ENCODE measurements at regions of chr12 and their contacts with region 1.

Region 1: DNA sequence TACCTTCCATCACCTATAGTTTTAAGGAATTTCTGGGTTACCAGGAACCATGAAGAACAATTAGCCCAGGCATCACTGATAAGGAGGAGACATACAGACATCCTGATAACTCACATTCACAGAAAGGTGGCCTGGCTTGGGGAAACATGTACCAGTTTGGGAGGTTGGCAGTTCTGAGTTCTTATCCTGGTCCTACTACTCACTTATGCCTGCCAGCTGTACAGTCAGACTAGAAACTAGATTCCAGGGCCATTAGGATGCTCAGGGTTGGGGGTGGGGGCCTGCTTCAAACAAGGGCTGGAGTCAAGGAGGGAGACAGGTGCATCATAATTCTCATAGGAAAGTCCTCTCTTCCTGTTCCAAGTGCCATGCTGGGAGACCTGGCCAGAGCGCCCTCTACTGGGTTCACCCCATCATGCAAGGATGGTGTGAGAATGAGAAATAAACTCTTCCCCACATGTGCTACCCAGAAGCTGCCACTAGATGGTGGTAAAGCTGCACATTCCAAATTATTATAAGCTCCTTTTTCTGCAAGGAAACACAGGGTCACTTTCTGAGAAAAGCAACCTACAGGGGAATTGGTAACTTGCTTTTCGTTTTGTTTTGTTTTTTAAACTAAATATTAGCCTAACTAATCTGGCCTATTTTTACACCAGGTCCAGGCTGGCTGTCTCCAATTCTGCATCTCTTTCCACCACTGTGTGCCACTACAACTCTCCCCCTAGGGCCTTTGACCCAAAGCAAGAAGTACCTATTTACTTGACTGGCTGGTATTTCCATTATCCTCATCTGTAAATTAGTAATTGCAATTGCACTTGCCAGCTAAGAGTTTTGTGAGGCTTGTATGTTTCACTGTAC is 14.5 kb downstream of the OAS2 start:
- DNase-seq: peak; percentile 73
- ATAC-seq: peak; percentile 76
- H3K4me3 ChIP-seq: no peak overlapping the region
- H3K4me3 Mint-ChIP-seq: no peak overlapping the region
- H3K27ac ChIP-seq: peak overlapping the region in 1 of 2 donors; percentile 40
- H3K27ac Mint-ChIP-seq: peak overlapping the region; percentile 53
- H3K4me1 ChIP-seq: peaks cover 8 to 12% of the 10 kb centered on the region in 2 donors
- H3K4me1 Mint-ChIP-seq: peaks cover 24% of the 10 kb centered on the region
- H3K27me3 ChIP-seq: no peaks in the 10 kb centered on the region
- H3K27me3 Mint-ChIP-seq: no peaks in the 10 kb centered on the region
- CTCF ChIP-seq: peak; percentile 90

Region 2: GRCh38 chr12:112906712-112907414 is 85.9 kb before region 1 on chr12 and contains the start of gene OAS1:
- CTCF ChIA-PET with region 1: interaction called, 54 read pairs
- POLR2A ChIA-PET with region 1: no interaction called
- intact Hi-C with region 1: no loop called
- DNase-seq: peak; percentile 79
- ATAC-seq: peak; percentile 73
- H3K4me3 ChIP-seq: peak within 1 kb of the TSS; percentile 47 to 90 (median 71)
- H3K4me3 Mint-ChIP-seq: peak within 1 kb of the TSS; percentile 95
- H3K27ac ChIP-seq: peak within 1 kb of the TSS; percentile 79 to 83
- H3K27ac Mint-ChIP-seq: peak within 1 kb of the TSS; percentile 95
- H3K4me1 ChIP-seq: peaks cover 45 to 75% of the 10 kb centered on the region in 2 donors
- H3K4me1 Mint-ChIP-seq: peaks cover 89% of the 10 kb centered on the region
- H3K27me3 ChIP-seq: no peaks in the 10 kb centered on the region
- H3K27me3 Mint-ChIP-seq: no peaks in the 10 kb centered on the region
- CTCF ChIP-seq: no peak
- total RNA-seq, gene OAS1: 45.7 and 48.3 TPM in 2 replicates

Region 3: GRCh38 chr12:113005754-113006153 is 13.0 kb after region 1 on chr12:
- CTCF ChIA-PET with region 1: interaction called, 10 read pairs
- POLR2A ChIA-PET with region 1: no interaction called
- intact Hi-C with region 1: no loop called
- DNase-seq: no peak
- ATAC-seq: no peak
- H3K4me3 ChIP-seq: no peak overlapping the region
- H3K4me3 Mint-ChIP-seq: no peak overlapping the region
- H3K27ac ChIP-seq: no peak overlapping the region
- H3K27ac Mint-ChIP-seq: no peak overlapping the region
- H3K4me1 ChIP-seq: no peaks in the 10 kb centered on the region
- H3K4me1 Mint-ChIP-seq: no peaks in the 10 kb centered on the region
- H3K27me3 ChIP-seq: no peaks in the 10 kb centered on the region
- H3K27me3 Mint-ChIP-seq: no peaks in the 10 kb centered on the region
- CTCF ChIP-seq: peak; percentile 26

Region 4: DNA sequence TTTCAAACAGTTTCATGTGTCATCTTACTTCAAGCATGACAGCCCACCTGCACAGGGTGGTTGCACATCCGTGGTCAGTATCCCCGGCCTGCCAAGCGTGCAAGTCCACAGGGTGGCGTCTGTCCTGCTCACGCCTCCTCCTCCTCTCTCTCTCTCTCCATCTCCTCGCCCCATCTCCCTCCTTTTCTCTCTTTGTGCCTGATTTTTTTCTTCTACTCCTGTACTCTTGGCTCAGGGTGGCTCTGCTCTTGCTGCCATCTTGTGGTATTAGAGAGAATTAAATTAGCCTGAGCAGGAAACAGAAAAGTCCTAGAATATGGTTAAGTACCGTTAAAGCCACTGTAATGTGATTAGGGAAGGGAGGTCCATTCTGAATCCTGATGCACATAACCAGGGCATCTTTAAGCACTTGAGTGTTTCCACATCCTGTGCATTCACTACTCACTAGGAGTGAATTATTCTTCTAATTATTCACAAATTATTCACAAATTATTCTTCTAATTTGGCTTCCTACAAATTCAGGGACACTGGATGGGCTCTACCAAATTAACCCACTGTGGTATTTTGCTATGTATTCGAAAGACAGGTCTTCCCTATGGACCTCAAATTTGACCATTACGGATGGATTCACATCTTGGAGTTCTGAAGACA is 38.2 kb after region 1 on chr12:
- CTCF ChIA-PET with region 1: interaction called, 52 read pairs
- POLR2A ChIA-PET with region 1: no interaction called
- intact Hi-C with region 1: loop called (anchors 1 kb)
- DNase-seq: peak; percentile 67
- ATAC-seq: no peak
- H3K4me3 ChIP-seq: no peak overlapping the region
- H3K4me3 Mint-ChIP-seq: peak overlapping the region; percentile 0
- H3K27ac ChIP-seq: no peak overlapping the region
- H3K27ac Mint-ChIP-seq: no peak overlapping the region
- H3K4me1 ChIP-seq: peaks cover 4 to 6% of the 10 kb centered on the region in 2 donors
- H3K4me1 Mint-ChIP-seq: peaks cover 5% of the 10 kb centered on the region
- H3K27me3 ChIP-seq: no peaks in the 10 kb centered on the region
- H3K27me3 Mint-ChIP-seq: peaks cover 3% of the 10 kb centered on the region
- CTCF ChIP-seq: peak; percentile 83

Region 5: DNA sequence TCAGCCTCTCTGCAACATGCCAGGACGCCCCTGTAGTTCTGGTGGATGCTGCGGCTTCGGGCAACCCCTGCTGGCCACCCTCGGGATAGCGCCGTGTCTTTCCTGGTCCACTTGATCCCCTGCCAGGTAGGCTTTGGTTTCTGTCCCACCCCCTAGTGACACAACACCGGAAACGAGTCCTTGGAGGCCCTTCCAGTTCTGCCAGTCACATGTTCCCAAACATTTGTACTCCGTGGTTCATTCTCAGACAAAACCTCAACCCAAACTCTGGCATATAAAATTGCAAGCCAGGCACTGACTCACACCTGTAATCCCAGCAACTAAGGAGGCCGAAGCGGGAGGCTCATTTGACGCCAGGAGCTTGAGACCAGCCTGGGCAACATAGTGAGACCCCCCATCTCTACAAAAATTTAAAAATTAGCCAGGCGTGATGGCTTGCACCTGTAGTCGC is 105.7 kb after region 1 on chr12:
- CTCF ChIA-PET with region 1: interaction called, 38 read pairs
- POLR2A ChIA-PET with region 1: no interaction called
- intact Hi-C with region 1: loop called (anchors 2 kb)
- DNase-seq: peak; percentile 82
- ATAC-seq: peak; percentile 87
- H3K4me3 ChIP-seq: no peak overlapping the region
- H3K4me3 Mint-ChIP-seq: no peak overlapping the region
- H3K27ac ChIP-seq: peak overlapping the region in 1 of 2 donors; percentile 15
- H3K27ac Mint-ChIP-seq: peak overlapping the region; percentile 73
- H3K4me1 ChIP-seq: peaks cover 9 to 20% of the 10 kb centered on the region in 2 donors
- H3K4me1 Mint-ChIP-seq: peaks cover 18% of the 10 kb centered on the region
- H3K27me3 ChIP-seq: peaks cover 0 to under 1% (median 0%) of the 10 kb centered on the region in 4 experiments
- H3K27me3 Mint-ChIP-seq: no peaks in the 10 kb centered on the region
- CTCF ChIP-seq: peak; percentile 95

Measured in B cell (primary cell).